ENCODE measurements at regions of chr19 and their contacts with region 1.

Region 1: GRCh38 chr19:27657271-27658051 is 1555.5 kb downstream of the UQCRFS1 start:
- DNase-seq: no peak
- ATAC-seq: no peak

Region 2: DNA sequence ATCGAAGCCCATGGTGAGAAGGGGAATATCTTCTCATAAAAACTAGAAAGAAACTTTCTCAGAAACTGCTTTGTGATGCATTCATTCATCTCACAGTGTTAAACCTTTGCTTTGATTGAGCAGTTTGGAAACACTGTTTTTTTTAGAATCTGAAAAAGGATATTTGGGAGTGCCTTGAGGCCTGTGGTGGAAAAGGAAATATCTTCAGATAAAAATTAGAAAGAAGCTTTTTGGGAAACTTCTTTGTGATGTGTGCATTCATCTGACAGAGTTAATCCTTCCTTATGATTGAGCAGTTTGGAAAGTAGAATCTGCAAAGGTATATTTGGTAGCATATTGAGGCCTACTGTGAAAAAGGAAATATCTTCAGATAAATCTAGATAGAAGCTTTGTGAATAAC is 39.5 kb before region 1 on chr19:
- intact Hi-C with region 1: no loop called
- DNase-seq: no peak
- ATAC-seq: no peak

Region 3: DNA sequence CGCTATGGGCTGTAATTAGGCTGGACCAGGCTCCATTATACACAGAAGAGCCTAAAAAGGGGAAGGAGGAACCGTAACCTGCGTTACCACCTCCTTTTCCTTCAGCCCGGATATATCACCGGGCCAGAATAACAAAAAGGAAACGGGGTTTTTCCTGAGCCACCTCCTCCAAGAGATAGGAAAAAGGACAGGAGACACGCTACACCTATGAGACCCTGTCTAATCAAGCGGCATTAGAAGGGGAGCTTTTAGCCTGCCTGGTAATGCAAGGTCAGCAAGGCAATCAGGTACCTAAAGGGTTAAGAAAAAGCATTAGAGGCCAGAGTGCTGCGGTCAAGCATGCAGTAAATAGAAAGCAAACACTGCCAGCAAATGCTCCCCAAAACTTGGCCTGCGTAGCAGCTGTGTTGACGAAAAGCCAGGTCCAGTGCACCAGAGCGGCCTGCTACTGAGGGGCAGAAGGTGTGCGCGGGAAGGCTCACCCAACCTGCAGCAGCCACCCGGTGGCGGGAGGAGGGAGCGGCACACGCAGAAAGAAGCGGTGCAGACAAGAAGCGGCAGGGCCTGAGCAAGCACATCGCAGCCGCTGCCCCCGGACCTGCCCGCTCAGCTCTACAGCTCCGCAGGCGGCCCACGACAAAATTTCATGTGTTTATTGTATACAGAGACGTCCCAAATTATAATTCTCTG is 89.4 kb after region 1 on chr19:
- intact Hi-C with region 1: loop called in 1 of 2 experiments (anchors 10 kb)
- DNase-seq: peak; percentile 41
- ATAC-seq: peak; percentile 68 to 90

Region 4: DNA sequence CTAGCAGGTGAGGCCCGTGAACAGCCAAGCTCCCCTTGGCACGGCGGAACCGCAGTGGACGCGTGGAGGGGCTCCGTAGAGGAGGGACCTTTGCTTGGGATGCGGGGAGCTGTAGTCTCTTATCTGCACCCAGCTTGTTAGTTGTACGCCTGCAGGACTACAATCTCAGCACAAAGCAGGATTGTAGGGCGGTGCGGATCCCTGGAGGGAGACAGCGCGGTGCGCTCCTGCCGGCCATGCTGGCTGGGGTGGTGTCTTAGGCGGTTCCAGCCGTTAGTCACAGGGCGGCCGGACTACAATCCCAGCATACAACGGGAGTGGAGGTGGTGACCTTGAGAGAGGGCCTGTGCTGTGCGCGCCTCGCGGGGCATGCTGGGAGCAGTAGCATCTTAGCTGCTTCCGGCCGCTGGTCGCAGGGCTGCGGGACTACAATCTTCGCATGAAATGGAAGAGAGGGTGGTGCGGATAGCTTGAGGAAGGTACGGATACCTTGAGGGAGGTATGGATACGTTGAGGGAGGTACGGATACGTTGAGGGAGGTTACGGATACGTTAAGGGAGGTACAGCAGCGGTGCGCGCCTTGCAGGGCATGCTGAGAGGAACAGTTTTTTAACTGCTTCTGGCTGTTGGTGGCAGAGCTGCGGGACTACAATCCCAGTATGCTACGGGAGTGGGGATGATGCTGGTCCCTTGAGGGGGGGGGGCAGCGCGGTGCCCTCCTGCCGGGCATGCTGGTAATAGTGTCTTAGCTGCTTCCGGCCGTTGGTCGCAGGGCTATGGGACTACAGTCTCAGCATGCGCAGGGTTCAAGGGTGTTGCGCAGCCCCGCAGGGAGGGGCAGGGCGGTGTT is 136.4 kb after region 1 on chr19:
- intact Hi-C with region 1: loop called in 1 of 2 experiments (anchors 10 kb)
- DNase-seq: peak; percentile 96
- ATAC-seq: peak; percentile 98 to 99

Measured in left cardiac atrium (tissue), 4 donors.